HepG2 (cell line): ENCODE measurements at regions of chr19 and their contacts with region 1.

Region 1: GRCh38 chr19:7799640-7800355 is 30.2 kb upstream of the EVI5L start:
- DNase-seq: peak; percentile 60
- ATAC-seq: peak; percentile 45; the same call in 2 of the 3 replicates
- H3K4me3 ChIP-seq: no peak overlapping the region
- H3K27ac ChIP-seq: no peak overlapping the region
- H3K4me1 ChIP-seq: 0 out of 2 replicates have a peak, but pooled peaks cover 4% of the 10 kb centered on the region
- H3K27me3 ChIP-seq: peaks cover 0 to 36% of the 10 kb centered on the region in 2 experiments
- CTCF ChIP-seq: peak; percentile 69
- EP300 ChIP-seq: no peak
- POLR2A ChIP-seq: no peak
- RAD21 ChIP-seq: peak; percentile 65; the same call in 1 of the 2 replicates

Region 2: DNA sequence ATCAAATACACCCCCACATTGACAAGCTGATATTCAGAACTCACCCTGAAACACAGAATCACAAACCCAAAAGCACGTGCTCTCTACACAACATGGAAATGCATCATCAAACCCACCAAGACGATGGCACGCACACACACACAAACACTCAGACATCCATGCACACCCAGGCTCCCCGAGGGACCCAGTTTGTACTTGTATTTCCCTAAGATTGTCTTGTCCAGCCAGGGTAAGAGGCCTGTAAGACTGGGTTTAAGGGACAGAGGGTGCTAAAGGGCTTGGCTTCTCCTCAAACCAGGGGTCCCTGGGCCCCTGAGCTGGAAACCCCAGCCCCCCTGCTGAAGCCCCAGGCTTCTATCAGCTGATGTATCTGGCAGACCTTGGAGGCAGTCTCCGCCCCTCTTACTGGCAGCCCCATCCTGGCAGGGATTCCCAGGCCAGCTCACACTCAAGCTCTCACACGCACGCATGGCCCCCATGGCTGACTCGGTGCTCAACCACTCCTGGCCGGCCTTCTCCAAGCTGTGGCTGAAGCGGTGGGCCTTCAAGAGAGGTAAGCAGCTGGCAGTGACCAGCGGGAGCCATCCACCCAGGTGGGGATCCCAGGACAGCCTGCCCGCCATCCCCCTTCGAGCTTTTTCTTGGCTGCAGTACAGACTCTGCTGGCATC is 444.5 kb before region 1 on chr19:
- CTCF ChIA-PET with region 1: no interaction called
- POLR2A ChIA-PET with region 1: no interaction called
- in situ Hi-C with region 1: no loop called
- intact Hi-C with region 1: loop called (anchors 2 kb)
- DNase-seq: no peak
- ATAC-seq: no peak; the same call in 2 of the 3 replicates
- H3K4me3 ChIP-seq: no peak overlapping the region
- H3K27ac ChIP-seq: no peak overlapping the region
- H3K4me1 ChIP-seq: no peaks in the 10 kb centered on the region
- H3K27me3 ChIP-seq: no peaks in the 10 kb centered on the region
- CTCF ChIP-seq: no peak
- EP300 ChIP-seq: no peak
- POLR2A ChIP-seq: no peak
- RAD21 ChIP-seq: no peak

Region 3: GRCh38 chr19:7562646-7563393 is 237.0 kb before region 1 on chr19:
- CTCF ChIA-PET with region 1: interaction called, 29 read pairs
- POLR2A ChIA-PET with region 1: interaction called, 7 read pairs
- in situ Hi-C with region 1: loop called (anchors 10 kb)
- intact Hi-C with region 1: no loop called
- DNase-seq: no peak
- ATAC-seq: no peak
- H3K4me3 ChIP-seq: no peak overlapping the region
- H3K27ac ChIP-seq: no peak overlapping the region
- H3K4me1 ChIP-seq: no peaks in the 10 kb centered on the region
- H3K27me3 ChIP-seq: no peaks in the 10 kb centered on the region
- CTCF ChIP-seq: no peak
- EP300 ChIP-seq: no peak
- POLR2A ChIP-seq: no peak
- RAD21 ChIP-seq: no peak

Region 4: GRCh38 chr19:7680606-7681339 is 119.0 kb before region 1 on chr19 and contains the start of gene TRAPPC5:
- CTCF ChIA-PET with region 1: no interaction called
- POLR2A ChIA-PET with region 1: no interaction called
- in situ Hi-C with region 1: loop called (anchors 10 kb)
- intact Hi-C with region 1: loop called (anchors 2 kb)
- DNase-seq: peak; percentile 52
- ATAC-seq: peak; percentile 76
- H3K4me3 ChIP-seq: peak within 1 kb of the TSS; percentile 85 to 99 (median 97)
- H3K27ac ChIP-seq: peak within 1 kb of the TSS; percentile 57
- H3K4me1 ChIP-seq: peaks cover 36% of the 10 kb centered on the region
- H3K27me3 ChIP-seq: peaks cover 3 to 18% of the 10 kb centered on the region in 2 experiments; a peak in 2 of 5 replicates
- CTCF ChIP-seq: peak; percentile 90
- EP300 ChIP-seq: no peak
- POLR2A ChIP-seq: peak in 1 of 2 experiments; percentile 84; a peak in 2 of 4 replicates
- RAD21 ChIP-seq: peak; percentile 99
- total RNA-seq, gene TRAPPC5: 74.8 and 78.7 TPM in 2 replicates

Region 5: GRCh38 chr19:7748770-7749209 is 51.0 kb before region 1 on chr19:
- CTCF ChIA-PET with region 1: no interaction called
- POLR2A ChIA-PET with region 1: no interaction called
- in situ Hi-C with region 1: no loop called
- intact Hi-C with region 1: loop called (anchors 2 kb)
- DNase-seq: peak; percentile 14
- ATAC-seq: peak; percentile 46; the same call in 1 of the 3 replicates
- H3K4me3 ChIP-seq: no peak overlapping the region
- H3K27ac ChIP-seq: no peak overlapping the region
- H3K4me1 ChIP-seq: no peaks in the 10 kb centered on the region
- H3K27me3 ChIP-seq: peaks cover 3 to 13% of the 10 kb centered on the region in 2 experiments; a peak in 2 of 5 replicates
- CTCF ChIP-seq: peak; percentile 40
- EP300 ChIP-seq: no peak
- POLR2A ChIP-seq: no peak
- RAD21 ChIP-seq: no peak